Pancreas (tissue), 10 donors: ENCODE measurements at regions of chr14 and their contacts with region 1.

Region 1: GRCh38 chr14:34098045-34098984 is 147.4 kb upstream of the EGLN3 start:
- DNase-seq: peak in 2 of 6 donors; percentile 6 to 53
- ATAC-seq: peak; percentile 38 to 85 (median 82)
- H3K4me3 ChIP-seq: no peak overlapping the region
- H3K27ac ChIP-seq: no peak overlapping the region
- H3K4me1 ChIP-seq: peaks cover 0 to 6% (median 0%) of the 10 kb centered on the region in 3 donors
- H3K27me3 ChIP-seq: no peaks in the 10 kb centered on the region
- CTCF ChIP-seq: peak in 3 of 4 donors; percentile 16 to 37 (median 36)

Region 2: DNA sequence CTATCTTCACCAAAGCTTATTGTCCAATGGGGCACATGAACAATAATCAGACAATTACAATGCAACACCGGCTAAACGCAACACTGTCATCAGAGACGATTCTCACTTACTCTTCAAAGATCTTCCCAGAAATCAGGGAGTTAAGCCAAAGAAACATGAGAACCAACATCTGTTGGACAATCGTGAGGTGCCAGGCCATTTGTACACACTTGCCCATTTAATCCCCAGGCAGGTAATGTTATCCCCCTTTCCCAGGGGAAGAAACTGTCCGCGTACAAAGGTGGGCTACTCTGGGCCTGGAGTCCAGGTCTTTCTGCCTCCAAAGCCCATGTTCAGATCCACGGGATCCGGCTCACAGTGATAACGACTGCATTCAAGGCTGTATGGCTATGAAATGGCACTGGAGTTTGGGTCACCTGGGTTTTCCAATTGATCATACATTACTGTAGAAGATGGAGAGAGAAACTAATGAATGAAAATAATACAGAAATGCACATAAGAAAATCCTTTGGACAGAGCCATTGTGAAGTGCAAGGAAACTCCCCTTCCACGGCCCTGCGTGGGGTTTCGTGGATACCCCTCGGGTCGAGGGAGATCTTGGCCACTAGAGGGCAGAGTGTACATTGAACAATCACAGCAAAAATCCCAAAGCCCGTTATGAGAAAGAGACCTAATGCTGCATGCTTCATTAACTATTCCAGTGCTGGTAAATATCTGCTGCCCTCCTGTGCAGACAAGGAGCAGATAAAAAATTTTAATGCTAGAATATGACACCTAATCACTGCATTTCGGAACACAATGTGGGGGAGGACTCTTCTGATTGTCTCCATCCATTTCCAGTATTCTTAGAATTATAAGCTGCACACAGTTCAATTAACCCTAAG is 258.9 kb before region 1 on chr14:
- intact Hi-C with region 1: loop called (anchors 5 to 10 kb)
- DNase-seq: peak in 5 of 6 donors; percentile 21 to 64 (median 45)
- ATAC-seq: peak; percentile 80 to 96 (median 92)
- H3K4me3 ChIP-seq: no peak overlapping the region
- H3K27ac ChIP-seq: no peak overlapping the region
- H3K4me1 ChIP-seq: peaks cover 0 to 5% (median 0%) of the 10 kb centered on the region in 3 donors
- H3K27me3 ChIP-seq: no peaks in the 10 kb centered on the region
- CTCF ChIP-seq: peak; percentile 58 to 81 (median 76)

Region 3: GRCh38 chr14:33938131-33938949 is 160.0 kb before region 1 on chr14:
- intact Hi-C with region 1: loop called in 1 of 3 experiments (anchors 10 kb)
- DNase-seq: peak; percentile 75 to 93 (median 91)
- ATAC-seq: peak; percentile 94 to 97 (median 95)
- H3K4me3 ChIP-seq: peak overlapping the region in 2 of 4 donors; percentile 15 to 17
- H3K27ac ChIP-seq: peak overlapping the region; percentile 55 to 75 (median 63)
- H3K4me1 ChIP-seq: peaks cover 5 to 26% (median 10%) of the 10 kb centered on the region in 3 donors
- H3K27me3 ChIP-seq: no peaks in the 10 kb centered on the region
- CTCF ChIP-seq: no peak

Region 4: DNA sequence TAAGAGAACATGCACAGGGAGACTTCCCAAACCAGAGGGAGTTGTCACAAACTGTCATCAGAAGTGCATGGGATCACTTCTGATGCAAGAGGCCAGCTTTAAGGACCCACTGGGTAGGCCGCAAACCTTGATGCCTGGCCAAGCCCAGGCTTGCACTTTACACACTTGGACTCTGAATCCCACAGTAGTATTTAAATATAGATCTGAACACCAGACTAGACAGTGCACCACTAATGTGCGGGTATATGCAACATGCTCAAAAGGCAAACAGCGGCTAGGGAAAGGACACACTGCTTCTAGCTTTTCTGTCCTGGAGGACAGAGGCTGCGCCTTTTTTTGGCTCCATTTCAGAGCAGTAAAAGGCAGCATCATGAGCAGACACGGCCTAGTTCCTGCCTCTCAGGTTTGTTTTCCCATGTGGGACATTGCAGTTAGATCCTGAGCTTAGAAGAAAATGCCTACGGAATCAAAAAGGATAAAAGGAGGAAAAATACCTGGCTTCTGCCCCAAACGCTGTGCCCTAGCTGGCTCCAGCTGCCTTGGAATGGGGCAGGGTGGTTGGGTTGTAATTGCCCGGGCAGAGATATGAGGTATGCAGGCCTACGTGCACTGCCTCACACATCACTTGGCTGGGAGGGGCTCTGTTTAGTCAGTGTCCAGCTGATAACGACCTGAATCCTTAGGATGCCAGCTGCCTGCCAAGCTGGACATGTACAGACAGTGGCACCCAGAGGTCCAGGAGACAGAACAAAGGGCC is 63.0 kb before region 1 on chr14:
- intact Hi-C with region 1: no loop called
- DNase-seq: no peak
- ATAC-seq: peak in 1 of 4 donors; percentile 68
- H3K4me3 ChIP-seq: no peak overlapping the region
- H3K27ac ChIP-seq: no peak overlapping the region
- H3K4me1 ChIP-seq: no peaks in the 10 kb centered on the region
- H3K27me3 ChIP-seq: no peaks in the 10 kb centered on the region
- CTCF ChIP-seq: no peak

Region 5: GRCh38 chr14:34157651-34158050 is 59.3 kb after region 1 on chr14:
- intact Hi-C with region 1: no loop called
- DNase-seq: no peak
- ATAC-seq: no peak
- H3K4me3 ChIP-seq: no peak overlapping the region
- H3K27ac ChIP-seq: no peak overlapping the region
- H3K4me1 ChIP-seq: no peaks in the 10 kb centered on the region
- H3K27me3 ChIP-seq: no peaks in the 10 kb centered on the region
- CTCF ChIP-seq: no peak

Region 6: GRCh38 chr14:34227834-34228649 is 129.7 kb after region 1 on chr14:
- intact Hi-C with region 1: loop called in 1 of 3 experiments (anchors 10 kb)
- DNase-seq: peak; percentile 23 to 77 (median 59)
- ATAC-seq: peak; percentile 91 to 99 (median 98)
- H3K4me3 ChIP-seq: no peak overlapping the region
- H3K27ac ChIP-seq: no peak overlapping the region
- H3K4me1 ChIP-seq: peaks cover 0 to 3% (median 0%) of the 10 kb centered on the region in 3 donors
- H3K27me3 ChIP-seq: no peaks in the 10 kb centered on the region
- CTCF ChIP-seq: peak; percentile 50 to 72 (median 60)

Region 7: DNA sequence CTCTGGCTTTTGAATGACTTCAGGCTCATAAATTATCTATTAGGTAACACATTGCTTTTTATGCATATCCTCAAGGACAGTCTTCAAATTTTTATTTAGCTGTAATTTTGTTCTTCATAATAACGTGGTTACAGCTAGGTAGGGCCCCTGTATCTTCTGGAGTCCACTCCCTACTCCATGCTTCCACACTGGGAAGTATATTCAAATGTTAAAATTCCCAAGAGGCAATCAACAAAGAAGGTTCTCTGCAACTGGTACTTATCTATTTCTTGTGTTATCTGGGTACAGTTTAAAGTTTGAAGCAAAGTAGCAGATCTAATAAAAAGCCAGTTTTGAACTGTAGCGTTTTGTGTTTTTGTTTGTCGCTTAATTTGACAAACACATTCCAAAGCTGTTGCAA is 797.0 kb after region 1 on chr14:
- intact Hi-C with region 1: no loop called
- DNase-seq: no peak
- ATAC-seq: no peak
- H3K4me3 ChIP-seq: no peak overlapping the region
- H3K27ac ChIP-seq: no peak overlapping the region
- H3K4me1 ChIP-seq: no peaks in the 10 kb centered on the region
- H3K27me3 ChIP-seq: no peaks in the 10 kb centered on the region
- CTCF ChIP-seq: no peak